Body of pancreas (tissue), 4 donors: ENCODE measurements at regions of chr3 and their contacts with region 1.

Region 1: DNA sequence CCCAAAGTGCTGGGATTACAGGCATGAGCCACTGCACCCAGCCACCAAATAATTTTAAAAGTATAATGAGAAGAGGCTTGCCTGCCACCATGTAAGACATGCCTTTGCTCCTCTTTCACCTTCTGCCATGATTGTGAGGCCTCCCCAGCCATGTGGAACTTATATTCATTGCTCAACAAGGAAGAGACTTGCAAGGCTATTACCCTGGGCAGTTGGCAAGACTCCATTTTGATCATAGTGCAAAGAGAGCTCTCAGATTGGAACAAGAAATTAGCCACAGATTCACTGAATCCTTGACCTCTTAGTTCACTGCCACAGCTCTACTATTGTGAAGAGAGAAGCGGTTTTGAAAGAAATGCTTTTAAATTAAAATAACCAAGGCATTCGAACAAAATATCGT is 6.1 kb downstream of the SCAP start:
- DNase-seq: no peak
- ATAC-seq: no peak
- H3K4me3 ChIP-seq: no peak overlapping the region
- H3K27ac ChIP-seq: no peak overlapping the region
- H3K4me1 ChIP-seq: peaks cover 15% of the 10 kb centered on the region
- H3K27me3 ChIP-seq: no peaks in the 10 kb centered on the region
- CTCF ChIP-seq: no peak
- POLR2A ChIP-seq: no peak

Region 2: GRCh38 chr3:47434849-47435248 is 34.8 kb before region 1 on chr3:
- intact Hi-C with region 1: loop called (anchors 5 kb)
- DNase-seq: peak in 1 of 4 donors; percentile 1
- ATAC-seq: no peak
- H3K4me3 ChIP-seq: no peak overlapping the region
- H3K27ac ChIP-seq: no peak overlapping the region
- H3K4me1 ChIP-seq: peaks cover 5% of the 10 kb centered on the region
- H3K27me3 ChIP-seq: no peaks in the 10 kb centered on the region
- CTCF ChIP-seq: no peak
- POLR2A ChIP-seq: no peak

Region 3: GRCh38 chr3:47612178-47612577 is 142.6 kb after region 1 on chr3:
- intact Hi-C with region 1: no loop called
- DNase-seq: peak in 1 of 4 donors; percentile 11
- ATAC-seq: peak; percentile 85
- H3K4me3 ChIP-seq: no peak overlapping the region
- H3K27ac ChIP-seq: peak overlapping the region in 3 of 4 donors; percentile 41 to 80 (median 44)
- H3K4me1 ChIP-seq: peaks cover 37% of the 10 kb centered on the region
- H3K27me3 ChIP-seq: no peaks in the 10 kb centered on the region
- CTCF ChIP-seq: no peak
- POLR2A ChIP-seq: no peak

Region 4: GRCh38 chr3:47890126-47890827 is 420.7 kb after region 1 on chr3:
- intact Hi-C with region 1: no loop called
- DNase-seq: no peak
- ATAC-seq: no peak
- H3K4me3 ChIP-seq: no peak overlapping the region
- H3K27ac ChIP-seq: peak overlapping the region in 1 of 4 donors; percentile 8
- H3K4me1 ChIP-seq: peaks cover 19% of the 10 kb centered on the region
- H3K27me3 ChIP-seq: no peaks in the 10 kb centered on the region
- CTCF ChIP-seq: no peak
- POLR2A ChIP-seq: no peak